Tibial artery (tissue), 4 donors: ENCODE measurements at regions of chr12 and their contacts with region 1.

Region 1: DNA sequence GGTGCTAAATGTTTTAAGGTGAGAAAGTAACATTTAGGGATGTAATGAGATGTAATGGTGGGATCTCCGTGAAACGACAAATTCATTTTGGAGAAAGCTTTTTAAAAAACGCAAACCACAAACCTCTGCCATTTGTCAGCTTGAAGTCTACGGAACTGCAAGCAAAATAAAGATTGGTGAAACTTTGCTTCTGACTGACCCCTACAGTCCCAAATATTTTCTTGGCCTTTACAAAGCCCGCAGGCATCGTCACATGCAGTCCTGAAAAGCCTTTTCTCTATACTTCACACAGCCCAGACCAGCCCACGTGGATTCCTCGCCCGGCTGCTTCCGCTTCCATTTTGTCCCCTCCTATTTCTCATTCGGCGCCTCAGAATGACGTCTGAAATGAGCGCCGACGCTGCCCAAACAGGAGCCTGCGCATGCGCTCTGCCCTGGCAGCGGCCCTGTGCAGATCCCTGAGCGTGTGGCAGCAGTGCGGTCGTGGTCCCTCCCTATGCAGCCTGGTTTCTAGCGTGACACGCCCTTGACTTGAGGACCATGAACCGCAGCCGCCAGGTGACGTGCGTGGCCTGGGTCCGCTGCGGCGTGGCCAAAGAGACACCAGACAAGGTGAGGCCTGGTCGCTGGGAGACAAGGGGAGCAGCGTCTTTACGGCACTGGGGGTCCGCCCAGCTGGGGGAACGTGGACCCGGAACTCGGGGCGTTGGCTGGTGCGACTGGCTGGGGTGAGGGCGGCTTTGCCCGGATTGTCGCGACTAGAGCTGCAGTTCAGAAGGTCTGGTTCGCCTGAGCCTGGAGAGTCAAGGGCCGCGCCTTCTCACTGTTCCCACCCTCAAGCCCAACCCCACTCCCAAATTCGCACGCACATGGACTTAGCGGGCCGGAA is at the start of gene PWP1:
- DNase-seq: peak; percentile 95
- H3K4me3 ChIP-seq: peak within 1 kb of the TSS; percentile 68 to 94
- H3K27ac ChIP-seq: peak within 1 kb of the TSS; percentile 74 to 77
- H3K4me1 ChIP-seq: peaks cover 0 to 22% (median 12%) of the 10 kb centered on the region in 4 donors
- H3K27me3 ChIP-seq: peaks cover 0 to 7% of the 10 kb centered on the region in 2 donors
- CTCF ChIP-seq: no peak

Region 2: GRCh38 chr12:107760809-107761501 is 75.4 kb after region 1 on chr12 and contains the start of gene PRDM4:
- intact Hi-C with region 1: loop called (anchors 1 kb)
- DNase-seq: peak; percentile 93 to 97
- H3K4me3 ChIP-seq: peak within 1 kb of the TSS; percentile 66 to 71
- H3K27ac ChIP-seq: peak within 1 kb of the TSS; percentile 55 to 73
- H3K4me1 ChIP-seq: peaks cover 0 to 37% (median 23%) of the 10 kb centered on the region in 4 donors
- H3K27me3 ChIP-seq: no peaks in the 10 kb centered on the region
- CTCF ChIP-seq: peak; percentile 26 to 44

Region 3: DNA sequence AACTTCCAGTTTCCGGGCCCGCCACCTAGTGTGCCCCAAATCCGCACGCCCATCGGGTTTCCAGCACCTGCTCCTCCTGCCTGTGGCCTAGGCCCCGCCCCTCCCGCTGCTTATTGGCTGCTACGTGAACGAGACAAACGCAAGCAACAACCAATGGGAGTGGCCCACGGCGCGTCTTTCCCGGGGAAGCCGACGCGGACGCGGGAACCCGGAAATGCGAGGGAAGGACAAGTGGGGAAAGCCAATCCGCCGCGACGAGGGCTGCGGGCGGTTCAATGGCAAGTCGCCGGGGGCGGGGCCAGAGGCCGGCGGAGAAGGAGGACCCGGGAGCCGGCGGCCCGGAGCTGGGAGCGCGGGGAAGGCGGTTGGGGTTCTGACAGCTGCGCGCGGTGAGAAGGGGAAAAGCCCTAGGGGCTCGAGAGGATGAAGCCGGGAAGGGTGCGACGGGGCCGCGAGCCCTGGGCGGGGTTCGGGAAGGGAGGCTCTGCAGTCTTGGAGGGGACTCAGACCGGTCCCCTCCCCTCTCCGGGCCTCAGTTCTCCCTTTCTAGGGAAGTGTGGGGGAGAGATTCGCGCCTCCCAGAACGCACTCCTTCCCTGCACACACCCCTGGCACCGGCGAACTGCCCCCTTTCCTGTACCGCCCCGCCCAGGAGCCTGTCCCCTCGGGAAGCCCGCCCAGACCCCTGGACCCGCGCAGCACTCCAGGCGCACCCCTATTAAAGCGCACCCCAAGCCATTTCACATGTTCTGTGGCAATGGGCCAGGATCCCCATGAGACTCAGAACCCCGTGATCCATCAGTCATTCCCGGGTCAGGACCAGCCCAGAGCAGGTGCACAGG is 829.6 kb after region 1 on chr12 and contains the start of gene FICD:
- intact Hi-C with region 1: loop called (anchors 10 kb)
- DNase-seq: peak; percentile 100
- H3K4me3 ChIP-seq: peak within 1 kb of the TSS; percentile 72 to 91
- H3K27ac ChIP-seq: peak within 1 kb of the TSS; percentile 53 to 79
- H3K4me1 ChIP-seq: peaks cover 0 to 26% (median 18%) of the 10 kb centered on the region in 4 donors
- H3K27me3 ChIP-seq: no peaks in the 10 kb centered on the region
- CTCF ChIP-seq: no peak